ENCODE measurements at regions of chr12 and their contacts with region 1.

Region 1: DNA sequence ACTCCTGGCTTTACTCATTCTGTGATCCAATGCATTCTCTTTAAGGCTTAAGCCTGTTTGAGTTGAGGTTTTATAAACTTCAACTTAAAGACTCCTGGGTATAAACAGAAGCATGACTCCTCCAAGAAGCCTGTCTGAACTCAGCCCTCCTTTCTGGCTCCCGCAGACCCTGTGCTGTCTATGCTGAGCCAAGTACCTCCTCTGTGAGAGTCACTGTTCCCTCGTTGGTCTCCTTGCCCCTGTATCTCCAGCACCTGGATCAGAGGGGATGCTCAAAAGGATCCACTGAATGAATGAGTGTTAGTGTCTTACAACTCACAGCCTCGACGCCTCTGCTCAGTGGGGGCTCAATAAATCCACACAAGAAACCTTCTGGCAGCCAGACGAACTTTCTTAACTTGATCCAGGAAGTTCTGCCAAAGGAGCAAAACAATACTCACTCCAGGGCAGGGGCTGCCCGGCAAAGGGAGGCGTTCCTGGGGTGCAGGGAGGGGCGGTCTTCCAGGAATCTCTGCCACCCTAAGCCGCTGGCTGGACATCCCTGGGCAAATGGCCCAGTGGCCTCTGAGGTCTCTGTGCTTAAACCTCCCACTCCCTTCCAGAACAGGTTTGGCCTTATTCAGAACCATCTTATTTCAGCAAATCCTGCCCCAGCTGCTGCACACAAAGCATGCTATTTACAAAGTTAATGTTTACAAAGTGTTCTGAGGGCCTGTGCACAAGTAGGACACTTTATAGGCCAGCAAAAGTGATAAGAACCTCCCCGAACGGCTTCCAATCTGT is 32.9 kb downstream of the MAP1LC3B2 start:
- DNase-seq: no peak
- ATAC-seq: no peak
- H3K4me3 ChIP-seq: no peak overlapping the region
- H3K4me3 Mint-ChIP-seq: no peak overlapping the region
- H3K27ac ChIP-seq: no peak overlapping the region
- H3K27ac Mint-ChIP-seq: peak overlapping the region; percentile 72
- H3K4me1 ChIP-seq: peaks cover 23% of the 10 kb centered on the region
- H3K4me1 Mint-ChIP-seq: peaks cover 34% of the 10 kb centered on the region
- H3K27me3 ChIP-seq: peaks cover 0 to 3% of the 10 kb centered on the region in 2 experiments
- H3K27me3 Mint-ChIP-seq: no peaks in the 10 kb centered on the region
- CTCF ChIP-seq: no peak

Region 2: GRCh38 chr12:116559162-116559935 is 32.7 kb before region 1 on chr12 and contains the start of gene MAP1LC3B2:
- CTCF ChIA-PET with region 1: interaction called, 8 read pairs
- POLR2A ChIA-PET with region 1: no interaction called
- intact Hi-C with region 1: loop called in 1 of 2 experiments (anchors 5 kb)
- DNase-seq: peak; percentile 47 to 92 (median 77)
- ATAC-seq: peak; percentile 80
- H3K4me3 ChIP-seq: peak within 1 kb of the TSS; percentile 40 to 47
- H3K4me3 Mint-ChIP-seq: peak within 1 kb of the TSS; percentile 69
- H3K27ac ChIP-seq: peak within 1 kb of the TSS; percentile 53 to 66
- H3K27ac Mint-ChIP-seq: peak within 1 kb of the TSS; percentile 94
- H3K4me1 ChIP-seq: peaks cover 29% of the 10 kb centered on the region
- H3K4me1 Mint-ChIP-seq: peaks cover 48% of the 10 kb centered on the region
- H3K27me3 ChIP-seq: no peaks in the 10 kb centered on the region
- H3K27me3 Mint-ChIP-seq: no peaks in the 10 kb centered on the region
- CTCF ChIP-seq: no peak
- total RNA-seq, gene MAP1LC3B2: 0.97 to 1.3 TPM

Region 3: GRCh38 chr12:116629480-116629879 is 37.4 kb after region 1 on chr12:
- CTCF ChIA-PET with region 1: no interaction called
- POLR2A ChIA-PET with region 1: no interaction called
- intact Hi-C with region 1: no loop called
- DNase-seq: no peak
- ATAC-seq: no peak
- H3K4me3 ChIP-seq: no peak overlapping the region
- H3K4me3 Mint-ChIP-seq: no peak overlapping the region
- H3K27ac ChIP-seq: no peak overlapping the region
- H3K27ac Mint-ChIP-seq: no peak overlapping the region
- H3K4me1 ChIP-seq: no peaks in the 10 kb centered on the region
- H3K4me1 Mint-ChIP-seq: peaks cover 1% of the 10 kb centered on the region
- H3K27me3 ChIP-seq: no peaks in the 10 kb centered on the region
- H3K27me3 Mint-ChIP-seq: peaks cover 39% of the 10 kb centered on the region
- CTCF ChIP-seq: no peak